Activated T-helper 2 cell treated with anti-CD3 and anti-CD28 coated beads, Interferon-gamma antibody, Interleukin-2, Interleukin-4, amounts not matched to agents 10 μg/mL and 5 μg/mL and 100 μg/mL, durations not matched to agents 14 hours and 24 hours and 36 hours (primary cell): ENCODE measurements at regions of chr15 and their contacts with region 1.

Region 1: GRCh38 chr15:52558196-52558595 is 10.6 kb downstream of the ARPP19 start:
- DNase-seq: peak; percentile 57
- H3K4me3 Mint-ChIP-seq: no peak overlapping the region
- H3K27ac Mint-ChIP-seq: peak overlapping the region; percentile 96
- H3K4me1 Mint-ChIP-seq: peaks cover 55% of the 10 kb centered on the region
- H3K27me3 Mint-ChIP-seq: no peaks in the 10 kb centered on the region

Region 2: GRCh38 chr15:52005748-52006701 is 552.2 kb before region 1 on chr15:
- intact Hi-C with region 1: loop called (anchors 5 kb)
- DNase-seq: no peak
- H3K4me3 Mint-ChIP-seq: peak overlapping the region; percentile 26
- H3K27ac Mint-ChIP-seq: peak overlapping the region; percentile 86
- H3K4me1 Mint-ChIP-seq: peaks cover 70% of the 10 kb centered on the region
- H3K27me3 Mint-ChIP-seq: no peaks in the 10 kb centered on the region

Region 3: GRCh38 chr15:52261498-52262242 is 296.5 kb before region 1 on chr15:
- intact Hi-C with region 1: loop called (anchors 2 kb)
- DNase-seq: peak; percentile 69
- H3K4me3 Mint-ChIP-seq: peak overlapping the region; percentile 51
- H3K27ac Mint-ChIP-seq: peak overlapping the region; percentile 84
- H3K4me1 Mint-ChIP-seq: peaks cover 42% of the 10 kb centered on the region
- H3K27me3 Mint-ChIP-seq: no peaks in the 10 kb centered on the region

Region 4: GRCh38 chr15:52481915-52482314 is 76.3 kb before region 1 on chr15:
- intact Hi-C with region 1: loop called (anchors 1 kb)
- DNase-seq: peak; percentile 64
- H3K4me3 Mint-ChIP-seq: peak overlapping the region; percentile 66
- H3K27ac Mint-ChIP-seq: peak overlapping the region; percentile 80
- H3K4me1 Mint-ChIP-seq: peaks cover 64% of the 10 kb centered on the region
- H3K27me3 Mint-ChIP-seq: no peaks in the 10 kb centered on the region

Region 5: DNA sequence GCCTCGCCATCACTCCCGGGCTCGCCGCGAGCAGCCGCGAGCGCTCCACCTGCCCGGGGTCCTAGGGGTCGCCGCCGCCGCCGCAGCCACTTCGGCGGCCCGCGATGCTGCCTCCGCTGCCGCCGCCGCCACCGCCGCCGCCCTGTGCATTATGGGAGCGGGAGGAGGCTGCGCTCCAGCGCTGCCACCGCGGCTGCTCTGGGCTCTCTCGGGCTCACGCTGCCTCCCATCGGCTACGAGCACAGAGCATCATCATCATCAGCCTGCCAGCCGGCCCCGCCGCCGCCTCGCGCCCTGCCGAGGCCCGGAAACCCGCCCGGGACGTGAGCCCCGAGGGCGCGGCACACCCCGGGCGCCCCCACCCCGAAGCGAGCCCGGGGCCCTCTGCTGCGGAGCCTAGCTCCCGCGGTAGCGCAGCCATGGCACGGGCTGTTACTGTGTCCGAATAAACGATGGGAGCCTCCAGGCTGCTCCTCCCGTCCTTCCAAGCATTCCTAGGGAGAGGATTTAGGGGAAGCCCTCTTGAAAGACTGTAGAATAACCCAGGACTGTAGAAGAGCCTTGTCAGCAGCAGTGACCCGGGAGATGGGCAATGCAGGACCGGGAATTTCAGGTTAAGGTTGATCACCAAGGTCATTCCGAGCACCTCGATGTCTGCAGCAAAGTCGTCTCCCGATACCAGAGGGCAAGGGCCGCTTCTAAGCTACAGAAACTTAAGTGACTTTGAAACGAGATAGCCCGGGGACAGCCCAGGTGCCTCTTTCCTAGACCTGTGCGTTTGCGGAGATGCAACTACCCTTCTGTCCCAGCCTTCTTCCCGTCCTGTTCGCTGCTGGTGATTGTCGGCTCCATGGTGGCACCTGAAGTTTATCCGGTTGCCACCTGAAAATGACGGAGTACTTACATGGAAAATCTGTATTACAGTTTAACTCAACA is 28.9 kb before region 1 on chr15:
- intact Hi-C with region 1: loop called (anchors 1 kb)
- DNase-seq: peak; percentile 78
- H3K4me3 Mint-ChIP-seq: peak overlapping the region; percentile 79
- H3K27ac Mint-ChIP-seq: peak overlapping the region; percentile 24
- H3K4me1 Mint-ChIP-seq: peaks cover 29% of the 10 kb centered on the region
- H3K27me3 Mint-ChIP-seq: peaks cover 18% of the 10 kb centered on the region

Region 6: DNA sequence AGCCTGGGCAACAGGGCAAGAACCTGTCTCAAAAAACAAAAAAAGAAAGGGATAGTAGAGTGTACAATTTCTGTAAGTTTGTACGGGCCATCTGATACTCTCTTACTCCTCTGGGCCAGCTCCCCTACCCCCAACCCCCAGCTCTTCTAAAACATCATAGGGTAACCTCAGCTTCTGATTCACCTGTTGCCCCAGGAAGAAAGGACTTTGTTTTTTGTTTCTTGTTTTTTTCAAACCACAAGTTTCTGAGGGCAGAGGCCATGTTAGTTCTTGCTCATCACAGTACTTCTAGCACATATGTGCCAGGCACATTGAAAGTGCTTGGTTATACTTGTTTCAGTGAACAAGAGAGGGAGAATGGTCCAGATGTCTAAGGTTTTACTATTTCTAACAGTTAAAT is 100.8 kb after region 1 on chr15:
- intact Hi-C with region 1: loop called (anchors 5 kb)
- DNase-seq: no peak
- H3K4me3 Mint-ChIP-seq: no peak overlapping the region
- H3K27ac Mint-ChIP-seq: peak overlapping the region; percentile 7
- H3K4me1 Mint-ChIP-seq: peaks cover 25% of the 10 kb centered on the region
- H3K27me3 Mint-ChIP-seq: no peaks in the 10 kb centered on the region

Region 7: DNA sequence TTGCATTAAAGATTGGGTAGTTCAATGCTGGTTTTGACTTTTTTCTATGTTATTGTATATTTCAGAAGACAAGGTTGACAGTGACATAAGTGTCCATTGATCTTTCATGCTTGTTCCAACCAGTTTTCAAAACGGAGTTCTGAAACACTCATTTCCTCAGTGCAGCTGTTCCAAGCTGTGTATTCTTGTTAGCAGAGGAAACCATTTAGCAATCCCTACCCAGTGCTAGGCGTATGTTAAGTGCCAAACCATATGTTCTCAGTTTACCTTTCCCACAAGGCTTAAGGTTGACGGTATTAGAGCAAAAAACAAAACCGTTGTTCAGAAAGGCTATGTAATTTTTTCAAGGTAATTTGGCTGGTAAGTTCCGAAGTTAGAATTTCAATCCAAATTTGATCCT is 111.9 kb after region 1 on chr15:
- intact Hi-C with region 1: no loop called
- DNase-seq: no peak
- H3K4me3 Mint-ChIP-seq: no peak overlapping the region
- H3K27ac Mint-ChIP-seq: no peak overlapping the region
- H3K4me1 Mint-ChIP-seq: peaks cover 19% of the 10 kb centered on the region
- H3K27me3 Mint-ChIP-seq: no peaks in the 10 kb centered on the region

Region 8: GRCh38 chr15:52870015-52870414 is 311.8 kb after region 1 on chr15:
- intact Hi-C with region 1: no loop called
- DNase-seq: no peak
- H3K4me3 Mint-ChIP-seq: no peak overlapping the region
- H3K27ac Mint-ChIP-seq: no peak overlapping the region
- H3K4me1 Mint-ChIP-seq: no peaks in the 10 kb centered on the region
- H3K27me3 Mint-ChIP-seq: no peaks in the 10 kb centered on the region